H1 (cell line): ENCODE measurements at regions of chr1 and their contacts with region 1.

Region 1: GRCh38 chr1:207838156-207839082 is 72.5 kb downstream of the CD34 start:
- DNase-seq: no peak
- H3K4me3 ChIP-seq: no peak overlapping the region
- H3K27ac ChIP-seq: no peak overlapping the region
- H3K4me1 ChIP-seq: peaks cover 0 to 3% (median 1%) of the 10 kb centered on the region in 4 experiments; a peak in 3 of 7 replicates
- H3K27me3 ChIP-seq: no peaks in the 10 kb centered on the region
- CTCF ChIP-seq: no peak
- EP300 ChIP-seq: no peak
- POLR2A ChIP-seq: no peak
- RAD21 ChIP-seq: no peak

Region 2: DNA sequence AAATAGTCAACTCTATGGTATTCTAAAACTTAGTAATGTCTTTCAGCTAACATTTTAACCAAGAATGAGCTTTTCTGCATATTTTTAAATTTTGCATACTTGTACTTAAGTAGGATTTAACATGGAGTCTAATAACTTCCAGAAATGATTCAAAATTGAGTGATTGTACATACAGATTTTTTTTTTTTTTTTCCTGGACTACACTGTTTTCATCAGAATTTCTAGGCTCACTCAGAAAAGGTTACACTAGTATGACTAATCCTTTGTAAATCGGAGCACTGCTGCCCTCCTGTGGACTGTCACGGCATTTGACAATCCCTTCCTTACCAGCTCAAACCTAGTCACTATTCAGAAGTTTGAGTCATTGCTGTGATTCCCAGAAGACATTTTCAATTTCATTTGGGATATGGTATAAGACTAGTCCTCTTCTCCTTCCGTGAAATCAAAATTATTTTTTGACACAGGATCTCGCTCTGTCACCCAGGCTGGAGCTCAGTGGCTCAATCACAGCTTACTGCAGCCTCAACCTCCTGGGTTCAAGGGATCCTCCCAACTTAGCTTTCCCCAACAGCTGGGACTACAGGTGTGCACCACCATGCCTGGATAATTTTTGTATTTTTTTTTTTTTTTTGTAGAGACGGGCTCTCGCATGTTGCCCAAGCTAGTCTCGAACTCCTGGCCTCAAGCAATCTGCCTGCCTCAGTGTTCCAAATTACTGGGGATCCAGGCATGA is 41.0 kb before region 1 on chr1:
- CTCF ChIA-PET with region 1: interaction called, 13 read pairs
- POLR2A ChIA-PET with region 1: no interaction called
- DNase-seq: peak; percentile 31 to 78
- H3K4me3 ChIP-seq: no peak overlapping the region
- H3K27ac ChIP-seq: no peak overlapping the region
- H3K4me1 ChIP-seq: peaks cover 0 to 2% (median 0%) of the 10 kb centered on the region in 4 experiments; a peak in 1 of 7 replicates
- H3K27me3 ChIP-seq: no peaks in the 10 kb centered on the region
- CTCF ChIP-seq: peak; percentile 41 to 83 (median 72)
- EP300 ChIP-seq: no peak
- POLR2A ChIP-seq: no peak
- RAD21 ChIP-seq: peak; percentile 69 to 72

Region 3: DNA sequence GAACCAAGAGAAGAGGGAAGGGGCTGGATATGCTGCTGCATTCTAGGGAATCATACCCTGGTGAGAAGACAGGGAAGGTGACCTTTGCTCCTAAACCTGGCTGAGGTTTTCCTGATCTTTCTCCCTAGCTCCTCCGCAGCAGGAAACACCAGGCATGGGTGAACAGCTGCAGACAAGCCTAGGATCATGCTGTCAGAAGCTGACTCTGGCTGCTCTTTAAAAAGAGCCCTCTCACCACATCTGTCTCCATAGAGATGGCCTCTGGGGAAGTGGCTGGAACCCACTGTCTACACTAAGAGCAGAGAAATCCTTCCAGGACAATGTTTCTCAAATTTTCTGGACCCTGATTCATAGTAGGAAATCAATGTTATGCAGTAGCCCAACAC is 14.9 kb after region 1 on chr1:
- CTCF ChIA-PET with region 1: interaction called, 10 read pairs
- POLR2A ChIA-PET with region 1: interaction called, 4 read pairs
- DNase-seq: no peak
- H3K4me3 ChIP-seq: no peak overlapping the region
- H3K27ac ChIP-seq: no peak overlapping the region
- H3K4me1 ChIP-seq: peaks cover 0 to 3% (median 0%) of the 10 kb centered on the region in 4 experiments; a peak in 1 of 7 replicates
- H3K27me3 ChIP-seq: no peaks in the 10 kb centered on the region
- CTCF ChIP-seq: no peak
- EP300 ChIP-seq: no peak
- POLR2A ChIP-seq: no peak
- RAD21 ChIP-seq: no peak

Region 4: GRCh38 chr1:207868774-207869721 is 30.6 kb after region 1 on chr1:
- CTCF ChIA-PET with region 1: interaction called, 36 read pairs
- POLR2A ChIA-PET with region 1: no interaction called
- DNase-seq: peak; percentile 29 to 90
- H3K4me3 ChIP-seq: peak overlapping the region; percentile 34 to 68 (median 50)
- H3K27ac ChIP-seq: no peak overlapping the region
- H3K4me1 ChIP-seq: peaks cover 0 to 8% (median 5%) of the 10 kb centered on the region in 4 experiments; a peak in 6 of 7 replicates
- H3K27me3 ChIP-seq: peaks cover 0 to 23% (median 8%) of the 10 kb centered on the region in 4 experiments; a peak in 6 of 7 replicates
- CTCF ChIP-seq: peak; percentile 69 to 82 (median 72)
- EP300 ChIP-seq: peak in 1 of 2 experiments; percentile 81; a peak in 1 of 3 replicates
- POLR2A ChIP-seq: no peak
- RAD21 ChIP-seq: peak; percentile 25 to 61

Region 5: GRCh38 chr1:207876131-207876530 is 37.7 kb after region 1 on chr1:
- CTCF ChIA-PET with region 1: interaction called, 113 read pairs
- POLR2A ChIA-PET with region 1: no interaction called
- DNase-seq: no peak
- H3K4me3 ChIP-seq: no peak overlapping the region
- H3K27ac ChIP-seq: no peak overlapping the region
- H3K4me1 ChIP-seq: 0 out of 7 replicates have a peak, but pooled peaks cover 0 to 2% (median 0%) of the 10 kb centered on the region in 4 experiments
- H3K27me3 ChIP-seq: no peaks in the 10 kb centered on the region
- CTCF ChIP-seq: peak; percentile 50 to 66 (median 51)
- EP300 ChIP-seq: no peak
- POLR2A ChIP-seq: no peak
- RAD21 ChIP-seq: peak; percentile 21 to 50; a peak in 3 of 4 replicates